Activated CD8-positive, alpha-beta T cell treated with anti-CD3 and anti-CD28 coated beads for 36 hours (primary cell): ENCODE measurements at regions of chr9 and their contacts with region 1.

Region 1: DNA sequence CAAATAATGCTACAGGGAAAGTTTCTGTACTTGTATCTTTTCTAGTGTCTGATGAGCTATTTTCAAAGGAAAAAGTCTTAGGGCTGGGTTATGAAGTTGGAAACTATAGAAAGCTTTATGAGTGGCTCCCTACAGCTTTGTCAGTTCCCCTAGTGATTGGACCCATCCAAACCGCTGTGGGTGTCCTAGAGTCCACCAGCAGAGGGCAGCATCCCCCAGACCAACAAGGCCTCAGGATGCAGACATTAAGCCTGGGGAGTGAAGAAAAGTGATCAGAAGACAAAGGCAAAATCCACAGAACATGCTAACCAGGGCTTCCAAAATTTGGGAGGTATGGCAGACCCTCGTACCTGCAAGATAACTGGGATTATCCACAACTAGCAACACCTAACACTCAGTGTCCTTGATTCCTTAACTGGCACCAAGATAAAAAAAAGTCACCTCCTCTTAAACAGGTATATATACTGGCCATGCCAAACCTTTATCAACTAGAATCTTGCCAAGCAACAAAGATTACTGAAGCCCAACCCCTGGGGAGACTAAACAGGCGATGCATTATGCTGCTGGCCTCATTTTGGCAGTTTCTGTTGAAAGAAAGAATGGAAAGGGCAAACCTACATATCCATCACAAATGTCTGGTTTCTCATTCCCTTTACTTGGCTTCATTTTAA is 110.4 kb upstream of the NR5A1 start:
- DNase-seq: peak; percentile 86
- ATAC-seq: peak; percentile 88
- H3K4me3 Mint-ChIP-seq: no peak overlapping the region
- H3K27ac Mint-ChIP-seq: no peak overlapping the region
- H3K4me1 Mint-ChIP-seq: no peaks in the 10 kb centered on the region
- H3K27me3 Mint-ChIP-seq: peaks cover 5% of the 10 kb centered on the region
- CTCF ChIP-seq: peak; percentile 68

Region 2: GRCh38 chr9:124370896-124371582 is 246.6 kb before region 1 on chr9:
- CTCF ChIA-PET with region 1: no interaction called
- POLR2A ChIA-PET with region 1: no interaction called
- intact Hi-C with region 1: no loop called
- DNase-seq: no peak
- ATAC-seq: no peak
- H3K4me3 Mint-ChIP-seq: no peak overlapping the region
- H3K27ac Mint-ChIP-seq: no peak overlapping the region
- H3K4me1 Mint-ChIP-seq: peaks cover 44% of the 10 kb centered on the region
- H3K27me3 Mint-ChIP-seq: no peaks in the 10 kb centered on the region
- CTCF ChIP-seq: no peak

Region 3: DNA sequence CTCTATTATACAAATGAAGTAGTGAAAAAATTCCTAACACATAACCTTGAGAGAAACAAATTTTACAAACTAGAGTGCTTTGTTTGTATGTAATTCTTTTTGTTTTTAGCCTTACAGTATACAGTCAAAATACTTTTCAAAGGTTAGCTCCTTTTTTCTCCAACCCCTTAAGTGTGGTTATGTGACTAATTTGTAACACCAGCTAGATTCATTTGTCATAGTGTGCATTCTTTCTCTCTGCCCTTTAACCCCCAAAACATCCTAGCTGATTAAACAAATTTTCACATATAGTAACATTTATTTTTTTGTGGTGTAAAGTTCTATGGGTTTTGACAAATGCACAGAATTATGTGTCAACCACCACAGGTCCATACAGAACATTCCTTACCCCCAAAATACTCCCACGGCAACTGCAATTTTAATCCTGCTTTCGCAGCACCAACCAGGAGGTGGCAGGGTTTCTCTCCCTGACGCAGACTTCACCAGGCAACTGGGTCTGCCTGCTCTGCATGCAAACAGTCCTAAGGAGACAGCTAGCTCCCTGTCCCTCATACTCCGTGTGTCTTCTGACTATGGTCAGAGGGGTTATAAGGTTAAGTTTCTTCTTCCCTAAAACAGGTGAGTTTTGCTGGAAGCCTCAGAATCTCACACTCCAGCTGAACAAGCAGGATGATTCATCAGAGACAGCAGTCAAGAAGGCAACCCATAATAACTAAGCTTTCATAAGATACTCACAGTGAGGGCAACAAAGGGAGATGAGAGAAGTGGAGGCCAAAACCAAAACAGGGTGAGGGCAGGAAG is 65.9 kb before region 1 on chr9:
- CTCF ChIA-PET with region 1: interaction called, 22 read pairs
- POLR2A ChIA-PET with region 1: no interaction called
- intact Hi-C with region 1: no loop called
- DNase-seq: peak; percentile 50
- ATAC-seq: peak; percentile 84
- H3K4me3 Mint-ChIP-seq: no peak overlapping the region
- H3K27ac Mint-ChIP-seq: no peak overlapping the region
- H3K4me1 Mint-ChIP-seq: peaks cover 16% of the 10 kb centered on the region
- H3K27me3 Mint-ChIP-seq: no peaks in the 10 kb centered on the region
- CTCF ChIP-seq: peak; percentile 55

Region 4: GRCh38 chr9:124594673-124595072 is 22.9 kb before region 1 on chr9:
- CTCF ChIA-PET with region 1: interaction called, 20 read pairs
- POLR2A ChIA-PET with region 1: no interaction called
- intact Hi-C with region 1: no loop called
- DNase-seq: no peak
- ATAC-seq: no peak
- H3K4me3 Mint-ChIP-seq: no peak overlapping the region
- H3K27ac Mint-ChIP-seq: no peak overlapping the region
- H3K4me1 Mint-ChIP-seq: no peaks in the 10 kb centered on the region
- H3K27me3 Mint-ChIP-seq: peaks cover 11% of the 10 kb centered on the region
- CTCF ChIP-seq: no peak

Region 5: GRCh38 chr9:124629600-124629999 is 12.0 kb after region 1 on chr9:
- CTCF ChIA-PET with region 1: interaction called, 12 read pairs
- POLR2A ChIA-PET with region 1: interaction called, 3 read pairs
- intact Hi-C with region 1: no loop called
- DNase-seq: no peak
- ATAC-seq: no peak
- H3K4me3 Mint-ChIP-seq: no peak overlapping the region
- H3K27ac Mint-ChIP-seq: no peak overlapping the region
- H3K4me1 Mint-ChIP-seq: no peaks in the 10 kb centered on the region
- H3K27me3 Mint-ChIP-seq: no peaks in the 10 kb centered on the region
- CTCF ChIP-seq: no peak

Region 6: GRCh38 chr9:124658165-124659017 is 40.8 kb after region 1 on chr9:
- CTCF ChIA-PET with region 1: interaction called, 34 read pairs
- POLR2A ChIA-PET with region 1: interaction called, 3 read pairs
- intact Hi-C with region 1: no loop called
- DNase-seq: peak; percentile 73
- ATAC-seq: peak; percentile 98
- H3K4me3 Mint-ChIP-seq: peak overlapping the region; percentile 94
- H3K27ac Mint-ChIP-seq: peak overlapping the region; percentile 90
- H3K4me1 Mint-ChIP-seq: peaks cover 28% of the 10 kb centered on the region
- H3K27me3 Mint-ChIP-seq: peaks cover 3% of the 10 kb centered on the region
- CTCF ChIP-seq: no peak

Region 7: DNA sequence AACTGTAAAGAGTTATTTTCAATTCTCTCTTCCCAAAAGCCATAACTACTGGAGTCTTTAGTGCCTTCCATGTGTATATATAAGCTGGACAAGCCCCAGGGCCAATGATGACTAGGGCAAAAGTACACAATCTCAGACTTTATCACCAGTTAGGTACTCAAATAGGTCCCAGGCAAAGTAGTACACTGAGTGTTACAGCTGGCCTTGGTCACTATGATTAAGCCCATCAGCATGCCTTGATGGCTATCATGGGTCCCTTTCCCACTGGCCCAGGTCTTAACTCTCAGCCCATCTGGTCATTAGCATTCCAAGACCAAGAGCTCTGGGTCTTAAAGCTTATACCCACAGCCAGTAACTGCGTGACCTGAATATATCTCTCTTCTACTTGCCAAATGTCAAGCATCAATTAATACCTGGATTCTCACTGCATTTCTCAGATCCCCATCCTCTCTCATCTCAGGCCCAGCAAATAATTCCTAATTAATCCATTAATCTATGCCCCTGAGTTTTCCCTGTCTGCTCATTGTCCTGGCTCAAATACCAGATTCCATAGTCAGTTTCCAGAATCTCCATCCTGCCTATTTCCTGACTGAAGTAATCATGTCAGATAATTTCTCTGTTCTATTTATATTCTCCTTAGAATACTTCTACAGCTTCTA is 91.2 kb after region 1 on chr9:
- CTCF ChIA-PET with region 1: interaction called, 122 read pairs
- POLR2A ChIA-PET with region 1: no interaction called
- intact Hi-C with region 1: loop called (anchors 1 kb)
- DNase-seq: no peak
- ATAC-seq: no peak
- H3K4me3 Mint-ChIP-seq: no peak overlapping the region
- H3K27ac Mint-ChIP-seq: no peak overlapping the region
- H3K4me1 Mint-ChIP-seq: peaks cover 2% of the 10 kb centered on the region
- H3K27me3 Mint-ChIP-seq: peaks cover 4% of the 10 kb centered on the region
- CTCF ChIP-seq: no peak

Region 8: DNA sequence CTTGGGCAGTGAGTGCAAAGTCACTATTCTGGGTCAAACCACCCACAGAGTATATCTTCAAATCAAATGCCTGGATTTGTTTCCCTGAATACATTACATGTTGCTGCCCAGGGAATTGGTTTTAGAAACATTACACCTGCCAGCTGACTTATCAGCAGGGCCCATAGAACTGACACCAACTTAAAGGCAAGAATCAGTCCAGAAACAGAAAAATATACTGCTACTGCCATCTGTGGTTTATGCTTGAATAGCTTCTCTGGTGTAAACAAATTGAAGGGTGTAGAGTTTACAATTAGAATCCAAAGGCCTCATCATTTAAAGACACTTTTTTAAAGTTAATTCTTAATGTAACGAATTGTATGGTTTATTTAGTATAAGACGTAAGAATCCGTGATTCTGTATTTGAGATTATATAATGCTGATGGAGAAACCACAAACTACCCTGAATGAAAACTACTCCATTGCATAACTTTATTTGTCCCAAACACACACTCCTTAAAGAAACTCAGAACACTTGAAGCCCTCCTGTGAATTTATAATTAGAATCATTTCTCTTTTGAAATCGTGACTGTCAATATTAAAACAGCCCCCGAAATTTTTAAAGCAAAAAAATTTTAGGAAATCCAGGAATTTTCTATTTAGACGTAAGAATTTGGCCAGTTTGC is 147.3 kb after region 1 on chr9:
- CTCF ChIA-PET with region 1: interaction called, 20 read pairs
- POLR2A ChIA-PET with region 1: no interaction called
- intact Hi-C with region 1: no loop called
- DNase-seq: no peak
- ATAC-seq: no peak
- H3K4me3 Mint-ChIP-seq: no peak overlapping the region
- H3K27ac Mint-ChIP-seq: no peak overlapping the region
- H3K4me1 Mint-ChIP-seq: peaks cover 9% of the 10 kb centered on the region
- H3K27me3 Mint-ChIP-seq: peaks cover 66% of the 10 kb centered on the region
- CTCF ChIP-seq: no peak

Region 9: DNA sequence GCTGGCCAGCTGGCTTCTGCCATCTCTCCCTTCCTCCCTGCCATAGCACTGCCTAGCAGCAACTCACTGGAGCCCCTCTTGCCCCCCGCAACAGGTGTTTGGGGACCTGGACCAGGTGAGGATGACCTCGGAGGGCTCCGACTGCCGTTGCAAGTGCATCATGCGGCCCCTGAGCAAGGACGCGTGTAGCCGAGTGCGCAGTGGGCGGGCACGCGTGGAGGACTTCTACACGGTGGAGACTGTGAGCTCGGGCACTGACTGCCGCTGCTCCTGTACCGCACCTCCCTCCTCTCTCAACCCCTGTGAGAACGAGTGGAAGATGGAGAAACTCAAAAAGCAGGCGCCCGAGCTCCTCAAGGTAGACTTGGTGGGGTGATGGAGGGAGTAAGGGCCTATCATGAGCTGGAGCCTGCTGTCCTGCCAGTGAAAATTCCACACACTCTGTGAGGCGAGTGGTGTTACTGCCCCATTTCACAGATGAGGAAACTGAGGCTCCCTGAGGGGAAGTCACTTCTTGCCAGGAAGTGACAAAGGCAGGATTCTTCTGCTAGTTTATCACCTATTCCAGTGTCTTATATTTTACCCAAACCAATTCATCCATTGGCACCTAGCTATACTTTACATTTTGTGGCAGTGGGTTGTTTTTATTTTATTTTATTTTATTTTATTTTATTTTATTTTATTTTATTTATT is 169.4 kb after region 1 on chr9:
- CTCF ChIA-PET with region 1: no interaction called
- POLR2A ChIA-PET with region 1: no interaction called
- intact Hi-C with region 1: no loop called
- DNase-seq: no peak
- ATAC-seq: no peak
- H3K4me3 Mint-ChIP-seq: no peak overlapping the region
- H3K27ac Mint-ChIP-seq: no peak overlapping the region
- H3K4me1 Mint-ChIP-seq: no peaks in the 10 kb centered on the region
- H3K27me3 Mint-ChIP-seq: peaks cover 1% of the 10 kb centered on the region
- CTCF ChIP-seq: no peak